Heart left ventricle (tissue), 16 donors: ENCODE measurements at regions of chrX and their contacts with region 1.

Region 1: DNA sequence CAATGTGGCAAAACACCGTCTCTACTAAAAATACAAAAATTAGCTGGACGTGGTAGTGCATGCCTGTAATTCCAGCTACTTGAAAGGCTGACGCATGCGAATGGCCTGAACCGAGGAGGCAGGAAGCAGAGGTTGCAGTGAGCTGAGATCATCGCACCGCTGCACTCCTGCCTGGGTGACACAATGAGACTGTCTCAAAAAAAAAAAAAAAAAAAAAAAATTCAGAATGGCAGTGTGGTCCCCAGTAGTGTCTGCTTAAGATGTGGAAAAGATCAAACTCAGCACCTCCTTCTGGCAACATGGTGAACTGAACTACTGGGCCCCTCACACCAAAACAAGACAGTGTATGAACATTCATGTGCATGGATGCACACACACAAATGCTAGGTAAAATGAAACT is 32.2 kb downstream of the SMS start:
- DNase-seq: peak in 1 of 5 donors; percentile 55
- ATAC-seq: peak; percentile 66 to 88 (median 78)
- H3K4me3 ChIP-seq: no peak overlapping the region
- H3K27ac ChIP-seq: peak overlapping the region in 1 of 12 donors; percentile 34
- H3K4me1 ChIP-seq: peaks cover 0 to 13% (median 0%) of the 10 kb centered on the region in 12 donors
- H3K27me3 ChIP-seq: no peaks in the 10 kb centered on the region
- CTCF ChIP-seq: no peak
- POLR2A ChIP-seq: no peak

Region 2: GRCh38 chrX:21745756-21746155 is 227.0 kb before region 1 on chrX:
- intact Hi-C with region 1: loop called in 2 of 10 experiments (anchors 10 kb)
- DNase-seq: peak in 1 of 5 donors; percentile 26
- ATAC-seq: no peak
- H3K4me3 ChIP-seq: no peak overlapping the region
- H3K27ac ChIP-seq: peak overlapping the region in 1 of 12 donors; percentile 19
- H3K4me1 ChIP-seq: peaks cover 0 to 53% (median 1%) of the 10 kb centered on the region in 12 donors
- H3K27me3 ChIP-seq: peaks cover 0 to 11% (median 0%) of the 10 kb centered on the region in 9 donors
- CTCF ChIP-seq: peak; percentile 24 to 57 (median 45)
- POLR2A ChIP-seq: no peak